ENCODE measurements at regions of chr4 and their contacts with region 1.

Region 1: DNA sequence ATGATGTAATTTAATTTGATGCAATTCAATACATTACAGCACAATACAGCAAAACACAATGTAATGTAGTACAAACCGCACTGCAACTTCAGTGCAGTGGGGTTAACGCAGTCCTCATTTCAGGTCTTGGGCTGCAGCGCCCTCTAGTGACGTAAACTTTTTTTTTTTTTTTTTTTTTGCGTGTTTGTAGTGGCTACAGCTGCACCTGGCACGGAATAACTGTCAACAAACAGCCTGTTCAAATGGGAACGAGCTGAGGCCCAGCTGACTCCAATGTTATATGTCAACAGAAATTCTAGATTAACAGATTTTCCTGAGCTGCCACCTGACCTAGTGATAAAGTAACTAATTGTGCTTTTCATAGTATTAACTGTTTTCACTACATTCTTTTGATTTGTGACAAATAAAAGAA is 33.5 kb upstream of the RASSF6 start:
- DNase-seq: peak in 1 of 3 donors; percentile 52
- ATAC-seq: peak; percentile 43 to 47
- H3K4me3 ChIP-seq: no peak overlapping the region
- H3K27ac ChIP-seq: no peak overlapping the region
- H3K4me1 ChIP-seq: no peaks in the 10 kb centered on the region
- H3K27me3 ChIP-seq: no peaks in the 10 kb centered on the region

Region 2: DNA sequence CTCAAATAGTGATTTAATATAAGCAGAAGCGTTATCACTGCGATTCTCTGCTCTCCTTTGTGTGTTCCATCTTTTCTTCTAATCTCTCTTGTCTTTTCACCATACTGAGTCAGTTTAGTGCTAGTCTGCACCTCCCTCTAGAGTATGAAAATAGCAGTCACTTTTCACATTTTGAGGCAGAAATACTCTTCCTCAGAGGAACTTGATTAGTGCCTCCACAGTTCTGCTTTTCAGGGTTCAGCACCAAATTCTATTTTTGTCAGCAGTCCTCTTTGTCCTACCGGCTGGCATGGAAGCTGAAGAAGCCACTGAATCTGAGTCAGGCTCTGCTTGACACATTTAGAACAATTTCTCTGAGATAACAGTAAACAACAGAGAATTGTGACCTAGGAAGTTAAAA is 345.4 kb before region 1 on chr4:
- intact Hi-C with region 1: loop called in 1 of 4 experiments (anchors 10 kb)
- DNase-seq: no peak
- ATAC-seq: no peak
- H3K4me3 ChIP-seq: no peak overlapping the region
- H3K27ac ChIP-seq: no peak overlapping the region
- H3K4me1 ChIP-seq: no peaks in the 10 kb centered on the region
- H3K27me3 ChIP-seq: no peaks in the 10 kb centered on the region

Measured in right cardiac atrium (tissue), 5 donors.